Activated naive CD4-positive, alpha-beta T cell treated with anti-CD3 and anti-CD28 coated beads for 36 hours (primary cell): ENCODE measurements at regions of chr1 and their contacts with region 1.

Region 1: GRCh38 chr1:94962409-94963265 is 35.7 kb upstream of the CNN3 start:
- DNase-seq: peak; percentile 48
- H3K4me3 Mint-ChIP-seq: peak overlapping the region; percentile 84
- H3K27ac Mint-ChIP-seq: peak overlapping the region; percentile 84
- H3K4me1 Mint-ChIP-seq: peaks cover 8% of the 10 kb centered on the region
- H3K27me3 Mint-ChIP-seq: no peaks in the 10 kb centered on the region

Region 2: GRCh38 chr1:94883691-94884090 is 78.9 kb before region 1 on chr1:
- CTCF ChIA-PET with region 1: no interaction called
- intact Hi-C with region 1: loop called (anchors 1 kb)
- DNase-seq: peak; percentile 35
- H3K4me3 Mint-ChIP-seq: peak overlapping the region; percentile 44
- H3K27ac Mint-ChIP-seq: peak overlapping the region; percentile 65
- H3K4me1 Mint-ChIP-seq: peaks cover 12% of the 10 kb centered on the region
- H3K27me3 Mint-ChIP-seq: no peaks in the 10 kb centered on the region